CD4-positive, alpha-beta memory T cell (primary cell): ENCODE measurements at regions of chr3 and their contacts with region 1.

Region 1: DNA sequence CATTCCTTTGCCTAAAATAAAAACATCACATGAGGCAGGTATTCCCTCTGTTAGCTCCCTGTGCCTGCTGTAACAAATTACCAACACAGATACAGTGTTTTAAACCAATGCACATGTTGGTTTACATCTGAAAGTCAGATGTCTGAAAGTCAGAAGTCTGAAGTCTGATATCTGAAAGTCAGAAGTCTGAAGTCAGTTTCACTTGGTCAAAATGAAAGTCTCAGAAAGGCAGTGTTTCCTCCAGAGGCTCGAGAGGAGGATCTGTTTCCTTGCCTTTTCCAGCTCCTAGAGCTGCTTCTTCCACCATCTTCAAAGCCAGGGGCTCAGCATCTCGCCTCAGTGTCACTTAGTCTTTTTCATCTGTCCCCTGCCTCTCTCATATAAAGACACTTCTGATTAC is 22.0 kb downstream of the SST start:
- DNase-seq: no peak
- H3K4me3 ChIP-seq: no peak overlapping the region
- H3K4me3 Mint-ChIP-seq: no peak overlapping the region
- H3K27ac ChIP-seq: no peak overlapping the region
- H3K27ac Mint-ChIP-seq: no peak overlapping the region
- H3K4me1 ChIP-seq: no peaks in the 10 kb centered on the region
- H3K4me1 Mint-ChIP-seq: no peaks in the 10 kb centered on the region
- H3K27me3 ChIP-seq: no peaks in the 10 kb centered on the region
- H3K27me3 Mint-ChIP-seq: peaks cover 26 to 40% of the 10 kb centered on the region in 2 donors

Region 2: GRCh38 chr3:187567661-187568121 is 80.5 kb before region 1 on chr3:
- CTCF ChIA-PET with region 1: no interaction called
- POLR2A ChIA-PET with region 1: no interaction called
- intact Hi-C with region 1: no loop called
- DNase-seq: no peak
- H3K4me3 ChIP-seq: no peak overlapping the region
- H3K4me3 Mint-ChIP-seq: no peak overlapping the region
- H3K27ac ChIP-seq: no peak overlapping the region
- H3K27ac Mint-ChIP-seq: no peak overlapping the region
- H3K4me1 ChIP-seq: no peaks in the 10 kb centered on the region
- H3K4me1 Mint-ChIP-seq: peaks cover 0 to 5% (median 0%) of the 10 kb centered on the region in 4 donors
- H3K27me3 ChIP-seq: no peaks in the 10 kb centered on the region
- H3K27me3 Mint-ChIP-seq: peaks cover 8 to 31% of the 10 kb centered on the region in 2 donors

Region 3: DNA sequence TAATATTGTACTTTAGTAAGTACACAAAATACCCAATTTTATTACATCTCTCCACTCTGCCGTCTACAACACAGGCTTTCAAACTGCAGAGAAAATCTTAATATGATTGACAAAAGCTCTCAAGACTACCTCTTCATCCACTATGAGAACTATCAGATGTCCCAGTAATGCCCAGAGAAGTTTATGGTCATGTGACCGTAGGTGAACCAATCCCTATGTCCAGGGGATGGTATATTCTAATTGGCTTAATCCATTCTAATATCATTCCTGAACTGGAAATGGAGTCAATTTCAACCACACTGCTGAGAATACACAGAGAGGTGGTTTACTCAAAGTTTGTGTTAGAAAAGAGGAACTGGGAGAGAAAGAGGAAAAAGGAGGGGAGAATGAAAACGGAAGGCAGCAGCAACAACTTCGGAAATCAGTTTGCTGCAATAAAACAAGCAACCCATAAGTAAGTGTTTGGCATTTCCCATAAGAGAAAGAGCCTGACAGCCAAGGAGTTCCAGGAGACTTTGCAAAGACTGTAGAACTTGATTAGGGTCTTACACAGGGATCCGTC is 14.8 kb after region 1 on chr3:
- CTCF ChIA-PET with region 1: interaction called, 11 read pairs
- POLR2A ChIA-PET with region 1: no interaction called
- intact Hi-C with region 1: no loop called
- DNase-seq: no peak
- H3K4me3 ChIP-seq: no peak overlapping the region
- H3K4me3 Mint-ChIP-seq: no peak overlapping the region
- H3K27ac ChIP-seq: no peak overlapping the region
- H3K27ac Mint-ChIP-seq: no peak overlapping the region
- H3K4me1 ChIP-seq: no peaks in the 10 kb centered on the region
- H3K4me1 Mint-ChIP-seq: no peaks in the 10 kb centered on the region
- H3K27me3 ChIP-seq: no peaks in the 10 kb centered on the region
- H3K27me3 Mint-ChIP-seq: peaks cover 18 to 20% of the 10 kb centered on the region in 2 donors